Posterior vena cava (tissue), 2 donors: ENCODE measurements at regions of chr21 and their contacts with region 1.

Region 1: GRCh38 chr21:43984905-43985689 is 27.0 kb upstream of the TRAPPC10 start:
- DNase-seq: no peak

Region 2: GRCh38 chr21:43921979-43922945 is 62.8 kb before region 1 on chr21:
- intact Hi-C with region 1: loop called in 1 of 2 experiments (anchors 10 kb)
- DNase-seq: no peak

Region 3: GRCh38 chr21:43961382-43961909 is 23.7 kb before region 1 on chr21:
- intact Hi-C with region 1: no loop called
- DNase-seq: no peak